Transverse colon (tissue), 4 donors: ENCODE measurements at regions of chr11 and their contacts with region 1.

Region 1: GRCh38 chr11:113289431-113290187 is 24.8 kb upstream of the TTC12 start:
- DNase-seq: peak; percentile 62
- H3K4me3 ChIP-seq: no peak overlapping the region
- H3K27ac ChIP-seq: no peak overlapping the region
- H3K4me1 ChIP-seq: no peaks in the 10 kb centered on the region
- H3K27me3 ChIP-seq: no peaks in the 10 kb centered on the region
- CTCF ChIP-seq: peak; percentile 81 to 89 (median 86)
- EP300 ChIP-seq: no peak
- POLR2A ChIP-seq: no peak

Region 2: DNA sequence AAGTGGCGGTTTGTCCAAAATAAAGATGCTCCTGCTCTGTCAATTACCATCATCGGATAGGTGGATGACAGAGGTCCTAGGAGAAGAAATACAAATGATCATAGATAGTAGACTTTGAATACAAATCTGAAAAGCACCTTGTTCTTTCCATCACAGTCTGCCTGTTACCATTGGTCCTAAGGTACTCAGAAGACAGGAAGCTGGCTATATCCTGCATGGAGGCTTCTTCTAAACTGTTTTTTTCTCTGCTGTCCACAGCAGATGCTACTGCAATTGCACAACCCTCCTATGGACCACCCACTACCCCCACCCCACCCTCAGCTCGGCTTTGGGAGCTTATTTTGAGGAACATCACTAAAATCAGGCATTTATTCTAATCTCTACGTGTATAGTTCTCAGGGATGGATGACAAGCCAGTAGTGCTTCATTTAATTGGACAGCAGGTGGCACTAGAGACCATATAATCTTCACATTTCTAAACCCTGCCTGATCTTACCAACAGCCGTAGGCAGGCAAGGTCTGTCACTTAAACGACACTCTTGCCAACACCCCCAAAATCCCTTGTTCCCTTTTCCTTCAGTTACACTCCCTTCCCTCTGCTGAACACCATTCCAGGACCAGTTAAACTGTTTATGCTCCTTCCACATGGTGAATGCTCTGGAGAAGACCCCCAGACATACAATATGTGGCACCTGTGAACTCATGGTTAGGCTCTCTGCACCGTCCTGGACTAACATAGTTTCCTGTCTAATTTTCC is 1070.0 kb before region 1 on chr11:
- in situ Hi-C with region 1: loop called in 1 of 4 experiments (anchors 25 kb)
- intact Hi-C with region 1: no loop called
- DNase-seq: peak; percentile 20
- H3K4me3 ChIP-seq: no peak overlapping the region
- H3K27ac ChIP-seq: no peak overlapping the region
- H3K4me1 ChIP-seq: peaks cover 0 to 12% (median 3%) of the 10 kb centered on the region in 4 donors
- H3K27me3 ChIP-seq: no peaks in the 10 kb centered on the region
- CTCF ChIP-seq: peak; percentile 72 to 89 (median 82)
- EP300 ChIP-seq: no peak
- POLR2A ChIP-seq: no peak

Region 3: GRCh38 chr11:112280268-112281126 is 1009.1 kb before region 1 on chr11:
- in situ Hi-C with region 1: loop called (anchors 10 to 25 kb)
- intact Hi-C with region 1: loop called (anchors 5 kb)
- DNase-seq: peak; percentile 66
- H3K4me3 ChIP-seq: peak overlapping the region; percentile 0 to 44 (median 24)
- H3K27ac ChIP-seq: peak overlapping the region in 3 of 4 donors; percentile 40 to 54 (median 52)
- H3K4me1 ChIP-seq: peaks cover 0 to 15% (median 8%) of the 10 kb centered on the region in 4 donors
- H3K27me3 ChIP-seq: no peaks in the 10 kb centered on the region
- CTCF ChIP-seq: peak; percentile 51 to 86 (median 72)
- EP300 ChIP-seq: no peak
- POLR2A ChIP-seq: no peak

Region 4: GRCh38 chr11:112289588-112290492 is 999.8 kb before region 1 on chr11:
- in situ Hi-C with region 1: loop called (anchors 10 to 25 kb)
- intact Hi-C with region 1: loop called (anchors 5 kb)
- DNase-seq: peak; percentile 88
- H3K4me3 ChIP-seq: peak overlapping the region; percentile 39 to 58 (median 52)
- H3K27ac ChIP-seq: peak overlapping the region; percentile 63 to 80 (median 79)
- H3K4me1 ChIP-seq: peaks cover 2 to 22% (median 18%) of the 10 kb centered on the region in 4 donors
- H3K27me3 ChIP-seq: no peaks in the 10 kb centered on the region
- CTCF ChIP-seq: peak; percentile 58 to 90 (median 79)
- EP300 ChIP-seq: no peak
- POLR2A ChIP-seq: no peak

Region 5: GRCh38 chr11:112588252-112588694 is 701.3 kb before region 1 on chr11:
- in situ Hi-C with region 1: loop called (anchors 5 to 10 kb)
- intact Hi-C with region 1: loop called (anchors 5 kb)
- DNase-seq: peak; percentile 44
- H3K4me3 ChIP-seq: no peak overlapping the region
- H3K27ac ChIP-seq: peak overlapping the region; percentile 44 to 64 (median 52)
- H3K4me1 ChIP-seq: peaks cover 4 to 18% (median 11%) of the 10 kb centered on the region in 4 donors
- H3K27me3 ChIP-seq: no peaks in the 10 kb centered on the region
- CTCF ChIP-seq: peak; percentile 55 to 68 (median 62)
- EP300 ChIP-seq: no peak
- POLR2A ChIP-seq: no peak

Region 6: GRCh38 chr11:113234888-113235287 is 54.7 kb before region 1 on chr11:
- in situ Hi-C with region 1: no loop called
- intact Hi-C with region 1: no loop called
- DNase-seq: no peak
- H3K4me3 ChIP-seq: no peak overlapping the region
- H3K27ac ChIP-seq: no peak overlapping the region
- H3K4me1 ChIP-seq: no peaks in the 10 kb centered on the region
- H3K27me3 ChIP-seq: no peaks in the 10 kb centered on the region
- CTCF ChIP-seq: no peak
- EP300 ChIP-seq: no peak
- POLR2A ChIP-seq: no peak

Region 7: DNA sequence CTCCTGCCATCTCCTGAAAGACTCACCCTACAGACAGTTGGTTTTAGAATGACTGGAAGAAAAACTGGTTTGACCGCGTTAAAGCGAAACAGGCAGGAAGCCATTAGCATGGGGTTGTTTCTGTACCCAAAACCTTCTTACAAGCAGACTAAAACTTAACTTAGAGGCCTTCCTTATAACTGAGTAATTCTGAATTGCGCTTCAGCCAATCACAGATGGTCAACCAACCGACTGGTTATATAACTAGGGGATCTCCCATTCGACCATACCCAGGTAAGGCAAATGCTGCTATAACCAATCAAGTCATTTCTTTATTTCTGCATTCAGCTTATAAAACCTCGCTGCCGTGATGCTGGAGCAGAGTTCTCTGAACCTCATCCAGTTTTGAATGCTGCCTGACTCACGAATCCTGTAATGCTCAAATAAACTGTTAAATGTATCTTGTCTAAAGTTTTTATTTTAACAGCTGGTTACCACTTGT is 273.4 kb after region 1 on chr11:
- in situ Hi-C with region 1: no loop called
- intact Hi-C with region 1: no loop called
- DNase-seq: no peak
- H3K4me3 ChIP-seq: no peak overlapping the region
- H3K27ac ChIP-seq: peak overlapping the region in 1 of 4 donors; percentile 29
- H3K4me1 ChIP-seq: no peaks in the 10 kb centered on the region
- H3K27me3 ChIP-seq: no peaks in the 10 kb centered on the region
- CTCF ChIP-seq: no peak
- EP300 ChIP-seq: no peak
- POLR2A ChIP-seq: no peak